Activated CD4-positive, alpha-beta T cell treated with anti-CD3 and anti-CD28 coated beads, Interleukin-2, amount 10 ng/mL, durations not matched to agents 24 days and 14 days (primary cell): ENCODE measurements at regions of chr7 and their contacts with region 1.

Region 1: DNA sequence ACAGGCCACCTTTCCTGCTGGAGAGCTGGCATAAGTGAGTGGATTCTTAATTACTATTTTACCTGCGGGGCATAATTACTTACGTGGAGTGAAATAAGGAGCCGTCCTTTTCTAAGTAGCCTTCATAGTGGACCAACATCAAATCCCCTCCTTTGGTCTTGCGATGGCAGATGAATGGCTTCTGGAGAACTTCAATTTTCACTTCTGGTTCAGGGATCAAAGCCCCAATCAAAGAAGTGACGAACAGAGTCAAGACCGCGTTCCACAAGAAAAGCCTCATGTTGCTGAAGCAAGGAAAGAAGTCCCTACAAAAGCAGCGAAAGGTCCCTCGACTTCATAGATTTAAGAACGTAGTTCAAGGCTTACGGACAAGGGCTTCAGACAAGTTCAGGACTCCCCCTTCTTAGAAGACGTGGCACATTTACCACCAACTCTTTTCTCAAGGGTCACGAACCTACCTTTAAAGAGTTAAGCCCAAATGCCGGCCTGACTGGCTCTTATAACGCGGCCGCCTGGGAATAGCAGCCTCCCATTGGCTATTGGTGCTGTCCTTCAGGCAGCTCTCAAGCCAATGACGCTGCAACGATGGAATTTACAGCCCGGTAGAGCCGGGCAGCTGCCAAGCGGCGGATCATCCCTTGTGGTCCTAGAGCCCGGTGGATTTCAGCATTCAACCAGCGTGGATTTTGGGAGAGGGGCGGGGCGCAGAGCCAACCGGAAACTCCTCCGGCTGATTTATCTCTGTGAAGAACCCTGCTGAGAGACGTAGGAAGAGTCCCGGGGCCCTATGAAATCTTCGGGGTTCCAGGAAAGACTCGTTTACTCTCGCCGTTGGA is at the start of gene FKBP14:
- DNase-seq: peak; percentile 97
- H3K4me3 Mint-ChIP-seq: no peak within 1 kb of the TSS
- H3K27ac Mint-ChIP-seq: peak within 1 kb of the TSS; percentile 88
- H3K4me1 Mint-ChIP-seq: peaks cover 27% of the 10 kb centered on the region
- H3K27me3 Mint-ChIP-seq: no peaks in the 10 kb centered on the region
- total RNA-seq, gene FKBP14: 8.2 and 8.6 TPM in 2 replicates

Region 2: GRCh38 chr7:29988424-29989256 is 37.8 kb before region 1 on chr7:
- intact Hi-C with region 1: loop called (anchors 2 kb)
- DNase-seq: peak; percentile 73
- H3K4me3 Mint-ChIP-seq: peak overlapping the region; percentile 70
- H3K27ac Mint-ChIP-seq: no peak overlapping the region
- H3K4me1 Mint-ChIP-seq: peaks cover 4% of the 10 kb centered on the region
- H3K27me3 Mint-ChIP-seq: peaks cover 58% of the 10 kb centered on the region

Region 3: DNA sequence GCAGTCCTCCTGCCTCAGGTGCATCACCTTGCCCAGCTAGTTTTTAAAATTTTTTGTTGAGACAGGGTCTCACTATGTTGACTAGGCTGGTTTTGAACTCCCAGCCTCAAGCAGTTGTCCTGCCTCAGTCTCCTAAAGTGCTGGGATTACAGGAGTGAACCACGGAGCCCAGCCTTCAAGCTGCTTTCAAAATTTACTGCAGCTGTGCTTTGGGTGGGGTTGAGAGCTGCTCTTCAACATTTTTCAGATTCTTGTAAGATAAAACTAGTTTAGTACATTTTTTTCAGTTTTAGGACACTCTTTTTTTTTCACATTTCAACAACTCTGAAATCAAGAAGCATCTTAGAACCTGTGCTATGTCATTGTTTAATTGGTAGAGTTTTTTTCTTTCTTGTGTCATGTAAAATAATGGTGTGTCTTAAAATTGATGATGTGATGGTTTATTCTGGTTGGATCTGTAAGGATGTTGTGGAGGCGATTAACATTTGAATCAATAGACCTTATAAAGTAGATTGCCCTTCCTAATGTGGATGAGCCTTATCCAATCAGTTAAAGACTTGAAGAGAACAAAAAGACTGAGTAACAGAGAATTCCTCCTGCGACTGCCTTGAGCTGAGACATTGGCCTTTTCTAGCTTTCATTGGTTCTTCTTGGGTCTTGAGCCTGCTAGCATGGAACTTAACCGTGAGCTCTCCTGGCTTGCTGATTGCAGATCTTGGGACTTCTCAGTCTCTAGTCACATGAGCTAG is 15.2 kb after region 1 on chr7:
- intact Hi-C with region 1: no loop called
- DNase-seq: no peak
- H3K4me3 Mint-ChIP-seq: no peak overlapping the region
- H3K27ac Mint-ChIP-seq: no peak overlapping the region
- H3K4me1 Mint-ChIP-seq: peaks cover 7% of the 10 kb centered on the region
- H3K27me3 Mint-ChIP-seq: no peaks in the 10 kb centered on the region

Region 4: DNA sequence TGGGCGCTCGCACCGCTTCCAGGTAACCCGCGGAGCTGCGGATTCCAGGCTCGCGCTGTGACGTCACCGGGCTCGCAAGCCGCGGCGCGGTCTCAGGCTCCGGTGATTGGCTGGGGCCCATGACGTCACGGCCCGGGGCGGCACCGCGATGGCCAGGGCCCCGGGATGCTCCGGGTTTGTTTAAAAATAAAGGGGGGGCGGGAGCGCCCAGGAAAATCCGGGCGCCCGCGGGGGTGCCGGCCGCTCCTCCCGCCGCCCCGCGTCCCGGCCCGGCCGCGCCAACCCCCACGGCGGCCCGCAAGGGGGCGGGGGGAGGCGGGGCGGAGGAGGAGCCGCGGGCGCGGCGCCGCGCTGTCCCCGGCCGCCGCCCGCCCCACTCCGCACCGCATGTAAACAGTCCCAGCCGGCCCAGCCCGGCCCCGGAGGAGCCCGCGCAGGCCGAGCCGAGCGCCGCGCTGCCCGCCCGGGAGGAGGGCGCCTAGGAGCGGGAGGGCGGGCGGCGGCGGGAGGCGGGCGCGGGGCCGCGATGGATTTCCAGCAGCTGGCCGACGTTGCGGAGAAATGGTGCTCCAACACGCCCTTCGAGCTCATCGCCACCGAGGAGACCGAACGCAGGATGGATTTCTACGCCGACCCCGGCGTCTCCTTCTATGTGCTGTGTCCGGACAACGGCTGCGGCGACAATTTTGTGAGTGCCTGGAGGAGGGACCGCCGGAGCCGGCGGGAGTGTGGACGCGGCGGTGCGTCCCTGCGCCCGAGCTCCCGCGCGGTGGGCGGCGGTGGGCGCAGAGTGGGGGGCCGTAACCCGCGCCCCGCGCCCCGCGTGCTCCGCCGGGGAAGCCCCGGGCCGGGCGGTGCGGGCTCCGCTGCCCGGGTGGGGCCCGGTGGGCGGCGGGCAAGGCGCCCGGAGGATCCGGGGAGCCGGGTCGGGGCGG is 108.4 kb after region 1 on chr7 and contains the start of gene MTURN:
- intact Hi-C with region 1: loop called (anchors 2 kb)
- DNase-seq: peak; percentile 96
- H3K4me3 Mint-ChIP-seq: peak within 1 kb of the TSS; percentile 92
- H3K27ac Mint-ChIP-seq: peak within 1 kb of the TSS; percentile 81
- H3K4me1 Mint-ChIP-seq: peaks cover 10% of the 10 kb centered on the region
- H3K27me3 Mint-ChIP-seq: peaks cover 35% of the 10 kb centered on the region
- total RNA-seq, gene MTURN: 3.8 and 4.2 TPM in 2 replicates

Region 5: GRCh38 chr7:30322271-30323005 is 296.0 kb after region 1 on chr7:
- intact Hi-C with region 1: loop called (anchors 10 kb)
- DNase-seq: peak; percentile 79
- H3K4me3 Mint-ChIP-seq: peak overlapping the region; percentile 78
- H3K27ac Mint-ChIP-seq: peak overlapping the region; percentile 96
- H3K4me1 Mint-ChIP-seq: peaks cover 42% of the 10 kb centered on the region
- H3K27me3 Mint-ChIP-seq: no peaks in the 10 kb centered on the region

Region 6: DNA sequence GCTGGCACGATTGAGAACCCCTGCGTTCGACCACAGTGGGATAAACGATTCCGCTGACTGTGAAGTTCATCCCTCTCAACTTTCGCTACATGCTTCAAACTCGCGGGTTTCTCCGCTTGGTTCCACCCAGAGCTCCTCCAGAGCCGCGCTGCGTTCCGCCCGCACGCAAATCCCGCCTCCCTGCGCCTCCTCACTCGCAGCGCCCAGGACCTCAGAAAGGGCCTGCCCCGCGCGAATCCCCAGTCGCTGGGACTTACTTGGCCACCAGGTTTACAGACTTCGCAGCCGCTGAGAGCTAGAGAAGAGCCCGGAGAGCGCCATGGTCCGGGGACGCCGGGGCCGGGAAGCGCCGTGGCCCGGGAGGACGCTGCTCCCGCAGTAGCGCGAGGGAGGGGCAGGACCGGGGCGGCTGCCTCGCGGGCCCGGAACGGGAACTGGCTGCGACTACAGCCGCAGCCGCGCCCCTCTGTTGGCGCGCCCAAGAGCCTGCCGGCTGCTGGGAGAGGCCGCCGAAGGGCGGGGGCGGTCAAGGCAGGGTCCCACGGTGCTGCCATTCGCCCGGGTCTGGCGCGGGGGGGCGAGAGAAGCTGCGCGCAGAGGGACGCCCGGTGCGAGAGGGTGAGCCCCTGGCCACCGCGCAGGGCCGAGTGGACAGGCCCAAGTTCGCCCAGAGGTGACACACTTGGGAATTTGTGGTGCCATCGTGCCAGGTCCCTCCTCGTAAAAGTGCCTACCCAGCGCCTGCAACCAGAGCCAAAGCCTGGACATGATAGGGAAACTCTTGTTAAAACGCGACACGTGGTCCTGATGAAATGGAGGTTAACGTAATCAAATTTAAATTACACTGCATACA is 452.1 kb after region 1 on chr7 and contains the start of gene NOD1:
- intact Hi-C with region 1: loop called (anchors 2 kb)
- DNase-seq: peak; percentile 93
- H3K4me3 Mint-ChIP-seq: peak within 1 kb of the TSS; percentile 92
- H3K27ac Mint-ChIP-seq: peak within 1 kb of the TSS; percentile 93
- H3K4me1 Mint-ChIP-seq: peaks cover 45% of the 10 kb centered on the region
- H3K27me3 Mint-ChIP-seq: no peaks in the 10 kb centered on the region
- total RNA-seq, gene NOD1: 11.6 and 12.9 TPM in 2 replicates

Region 7: GRCh38 chr7:30594549-30595435 is 568.3 kb after region 1 on chr7 and contains the start of gene GARS1:
- intact Hi-C with region 1: loop called (anchors 2 kb)
- DNase-seq: peak; percentile 97
- H3K4me3 Mint-ChIP-seq: peak within 1 kb of the TSS; percentile 94
- H3K27ac Mint-ChIP-seq: peak within 1 kb of the TSS; percentile 98
- H3K4me1 Mint-ChIP-seq: peaks cover 49% of the 10 kb centered on the region
- H3K27me3 Mint-ChIP-seq: no peaks in the 10 kb centered on the region
- total RNA-seq, gene GARS1: 261 and 262 TPM in 2 replicates